GM13977 (cell line): ENCODE measurements at regions of chr4 and their contacts with region 1.

Region 1: DNA sequence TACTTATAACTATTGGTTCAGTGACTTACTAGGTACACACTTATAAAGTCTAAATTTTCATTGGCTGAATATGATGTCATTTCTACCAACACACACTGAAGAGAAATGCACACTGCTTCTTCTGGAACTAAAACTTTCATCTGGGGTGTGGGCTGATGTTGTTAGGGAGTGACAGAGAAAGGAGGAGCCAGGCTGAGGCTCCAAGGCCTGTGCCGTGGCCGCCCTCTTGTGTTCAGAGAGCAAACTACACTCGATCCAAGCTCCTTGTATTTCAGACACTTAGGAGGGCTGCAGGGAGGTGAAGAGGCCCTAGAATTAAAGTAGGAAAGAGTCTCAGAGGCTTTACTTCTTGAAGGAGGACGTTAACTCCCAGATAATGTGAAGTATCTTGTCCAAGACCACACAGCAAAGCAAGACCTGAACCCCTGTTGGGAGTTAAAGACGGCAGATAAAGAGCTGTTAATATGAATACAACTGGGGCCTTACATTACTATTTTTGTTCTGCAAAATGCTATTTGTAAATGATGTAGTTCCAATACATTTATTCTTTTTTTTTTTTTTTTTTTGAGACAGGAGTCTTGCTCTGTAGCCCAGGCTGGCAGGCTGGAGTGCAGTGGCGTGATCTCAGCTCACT is 137.5 kb downstream of the AFAP1 start:
- DNase-seq: peak; percentile 83
- CTCF ChIP-seq: peak; percentile 95

Region 2: DNA sequence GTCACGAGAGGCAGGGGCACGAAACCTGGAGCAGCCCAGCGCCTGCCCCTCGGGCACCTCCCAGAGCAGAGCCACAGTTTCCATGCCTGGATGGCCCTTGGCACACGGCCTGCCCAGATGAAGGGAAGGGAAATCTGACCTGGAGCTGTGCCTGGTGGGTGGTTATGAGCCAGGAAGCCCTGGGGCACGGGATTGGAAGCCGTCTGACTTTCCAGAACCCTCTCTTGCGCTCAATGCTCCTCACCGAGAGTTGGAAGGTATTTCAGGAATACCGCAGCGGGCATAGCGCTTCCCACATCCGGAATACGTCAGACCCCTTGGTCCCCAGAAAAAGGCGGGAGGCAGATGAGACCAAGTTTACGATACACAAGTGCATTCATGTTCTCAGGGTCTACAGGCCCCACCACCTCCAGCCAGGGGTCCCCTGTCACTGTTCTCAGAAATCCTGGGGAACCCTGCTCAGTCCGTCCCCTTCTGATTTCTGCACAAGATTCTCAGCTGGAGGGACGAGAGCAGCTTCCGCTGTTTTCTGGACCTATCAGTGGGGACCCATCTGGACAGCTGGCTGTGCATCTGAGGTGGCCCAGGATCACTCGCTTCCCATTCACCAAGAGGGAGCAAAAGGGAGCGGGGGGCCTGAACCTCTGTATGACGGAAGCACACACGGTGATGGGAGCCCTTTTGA is 35.4 kb before region 1 on chr4:
- in situ Hi-C with region 1: loop called (anchors 5 kb)
- DNase-seq: no peak
- CTCF ChIP-seq: no peak

Region 3: DNA sequence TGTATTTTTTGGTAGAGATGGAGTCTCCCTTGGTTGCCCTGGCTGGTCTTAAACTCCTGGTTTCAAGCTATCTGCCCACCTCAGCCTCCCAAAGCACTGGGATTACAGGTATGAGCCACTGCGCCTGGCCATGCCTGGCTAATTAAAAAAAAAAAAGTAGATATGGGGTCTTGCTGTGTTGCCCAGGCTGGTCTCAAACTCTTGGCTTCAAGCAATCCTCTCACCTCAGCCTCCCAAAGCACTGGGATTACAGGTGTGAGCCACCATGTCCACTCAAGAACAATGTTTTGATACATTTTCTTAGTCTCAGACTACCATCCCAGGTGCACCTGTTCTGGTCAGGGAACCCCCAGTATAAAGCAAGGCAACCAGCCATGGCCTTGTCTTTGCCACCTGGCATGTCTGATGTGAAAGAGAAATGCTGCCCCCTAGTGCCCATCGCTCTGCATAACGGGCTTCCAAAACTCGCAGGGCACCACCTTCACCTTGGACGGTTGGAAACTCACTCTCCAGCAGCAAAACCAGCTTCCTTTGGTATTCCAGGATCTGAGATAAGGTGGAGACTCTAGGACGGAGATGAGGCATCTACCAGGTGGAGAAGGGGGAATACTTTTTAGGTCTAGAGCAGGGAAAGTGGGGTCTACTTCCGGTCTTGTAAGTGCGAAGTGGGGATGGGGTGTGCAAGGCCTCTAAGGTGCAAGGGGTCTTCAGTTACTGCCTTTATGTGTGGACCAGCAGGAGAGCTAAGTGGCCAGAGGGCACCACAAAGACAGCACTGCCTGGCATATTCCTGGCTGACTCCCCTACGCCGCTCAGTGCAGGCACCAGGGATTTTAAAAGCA is 185.2 kb after region 1 on chr4:
- in situ Hi-C with region 1: loop called (anchors 10 kb)
- DNase-seq: peak; percentile 88
- CTCF ChIP-seq: peak; percentile 93

Region 4: DNA sequence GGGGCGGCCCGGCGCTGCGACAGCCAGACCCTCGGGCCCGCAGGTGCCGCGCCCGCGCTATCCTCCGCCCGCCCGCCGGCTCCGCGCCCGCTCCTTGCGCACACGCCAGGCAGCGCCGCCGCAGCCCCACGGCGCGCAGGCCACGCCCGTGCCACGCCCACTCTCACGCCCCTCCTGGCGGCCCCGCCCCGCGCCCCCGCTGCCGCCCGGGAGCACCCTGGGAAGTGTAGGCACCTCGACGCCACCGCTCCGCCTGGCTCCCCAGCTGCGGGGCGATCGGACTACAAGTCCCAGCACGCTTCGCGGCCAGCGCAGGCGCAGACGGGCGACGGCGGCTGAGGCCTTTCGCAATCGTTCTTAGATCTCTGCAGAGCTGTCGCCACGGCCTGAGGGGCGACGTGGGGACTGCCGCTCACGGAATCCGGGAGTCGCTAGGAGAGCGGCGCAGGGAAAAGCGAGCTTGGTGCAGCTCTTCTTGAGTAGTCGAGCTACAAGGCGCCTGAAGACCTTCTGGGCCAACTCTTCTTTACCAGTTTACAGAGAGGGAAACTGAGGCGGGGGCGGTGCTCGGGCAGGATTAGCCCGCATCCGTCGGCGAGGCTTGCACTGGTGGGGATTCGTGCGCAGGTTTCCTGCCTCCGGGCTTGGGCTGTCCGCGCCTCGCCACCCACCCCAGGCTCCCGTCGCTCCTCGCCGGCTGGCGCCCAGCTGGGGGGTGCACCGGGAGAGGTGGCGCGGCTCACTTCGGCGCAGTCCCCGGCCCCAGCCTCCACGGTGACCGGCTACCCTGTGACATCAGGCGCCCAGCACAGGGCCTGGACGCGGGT is 356.7 kb after region 1 on chr4 and contains the start of gene ABLIM2:
- in situ Hi-C with region 1: no loop called
- DNase-seq: peak; percentile 100
- CTCF ChIP-seq: no peak